ENCODE measurements at regions of chr3 and their contacts with region 1.

Region 1: DNA sequence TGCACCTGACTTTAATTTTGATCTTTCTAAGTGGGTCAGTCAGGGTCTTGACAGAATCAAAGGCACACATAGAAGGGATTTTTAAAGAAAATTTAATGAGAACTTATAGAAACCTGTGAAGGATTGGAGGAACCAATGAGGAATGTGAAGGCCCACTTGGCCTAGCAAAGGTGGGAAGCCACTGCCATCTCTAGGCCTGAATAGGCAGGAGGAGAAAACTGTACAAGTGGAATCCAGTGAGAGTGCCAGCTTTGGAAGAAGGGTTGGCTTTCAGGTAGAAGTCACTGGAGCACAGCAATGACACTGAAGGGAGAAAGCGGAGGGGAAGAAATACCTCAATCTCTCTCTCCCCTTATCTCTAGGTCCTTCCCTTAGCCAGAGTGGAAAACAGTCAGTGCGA is 380.7 kb upstream of the KCNMB2 start:
- DNase-seq: no peak
- H3K4me3 ChIP-seq: no peak overlapping the region
- H3K27ac ChIP-seq: no peak overlapping the region
- H3K4me1 ChIP-seq: no peaks in the 10 kb centered on the region
- H3K27me3 ChIP-seq: no peaks in the 10 kb centered on the region
- CTCF ChIP-seq: peak; percentile 16; the same call in 1 of the 2 replicates

Region 2: DNA sequence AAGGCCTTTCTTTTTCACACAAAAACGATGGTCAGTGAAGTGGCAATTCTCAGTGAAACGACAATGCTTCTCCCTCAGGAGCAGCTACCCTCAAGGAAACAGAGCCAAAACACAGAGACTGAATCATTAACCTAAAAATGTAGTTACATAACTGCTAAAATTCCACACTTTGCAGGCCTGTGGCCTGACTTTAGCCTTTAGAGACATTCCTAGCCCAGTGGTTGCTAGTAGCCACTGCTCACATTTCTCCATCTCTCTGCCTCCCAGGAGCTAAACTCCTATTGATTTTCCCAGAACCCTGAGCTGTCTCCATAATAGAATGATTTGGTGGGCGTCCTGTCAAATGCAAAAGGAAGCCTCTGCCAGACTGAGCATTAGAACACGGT is 249.4 kb before region 1 on chr3:
- CTCF ChIA-PET with region 1: no interaction called
- POLR2A ChIA-PET with region 1: interaction called, 10 read pairs
- intact Hi-C with region 1: no loop called
- DNase-seq: peak; percentile 26 to 67
- H3K4me3 ChIP-seq: no peak overlapping the region
- H3K27ac ChIP-seq: 0 out of 2 replicates have a peak overlapping the region, but pooled peaks have one; percentile 16
- H3K4me1 ChIP-seq: peaks cover 14% of the 10 kb centered on the region
- H3K27me3 ChIP-seq: no peaks in the 10 kb centered on the region
- CTCF ChIP-seq: no peak

Region 3: DNA sequence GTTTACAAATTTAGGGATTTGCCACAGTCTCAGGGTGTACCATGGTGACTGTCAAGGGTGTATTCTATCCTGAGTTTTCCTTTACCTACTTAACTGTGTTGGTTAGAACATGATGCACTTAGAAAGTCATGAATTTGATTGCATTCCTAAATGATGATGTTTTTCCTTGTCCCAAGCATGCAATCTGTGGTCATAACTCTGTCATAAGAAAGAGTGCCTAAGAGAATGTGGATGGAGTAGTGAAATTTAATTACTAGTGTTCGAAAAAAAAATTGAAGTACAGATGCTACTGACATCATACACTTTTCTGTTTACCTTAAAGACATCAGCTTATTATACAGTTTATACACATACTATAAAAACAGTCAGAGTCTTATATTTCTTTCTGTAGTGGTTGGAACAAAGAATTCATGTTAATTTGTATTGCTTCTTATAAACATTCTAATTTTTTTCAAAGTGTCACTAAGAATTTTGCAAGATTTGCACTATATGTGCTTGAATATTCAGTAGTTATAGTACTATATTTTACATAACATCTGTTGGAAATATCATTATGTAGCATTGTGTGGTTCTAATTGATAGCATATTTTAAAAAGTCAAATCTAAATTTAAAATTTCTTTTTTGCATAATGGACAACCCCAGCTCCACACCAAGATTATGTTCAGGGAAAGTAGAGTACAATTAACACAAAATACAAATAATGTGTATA is 149.4 kb after region 1 on chr3:
- CTCF ChIA-PET with region 1: no interaction called
- POLR2A ChIA-PET with region 1: no interaction called
- intact Hi-C with region 1: no loop called
- DNase-seq: no peak
- H3K4me3 ChIP-seq: no peak overlapping the region
- H3K27ac ChIP-seq: no peak overlapping the region
- H3K4me1 ChIP-seq: no peaks in the 10 kb centered on the region
- H3K27me3 ChIP-seq: no peaks in the 10 kb centered on the region
- CTCF ChIP-seq: no peak